Right ventricle myocardium inferior (tissue), 1 donor: ENCODE measurements at regions of chr6 and their contacts with region 1.

Region 1: GRCh38 chr6:89829591-89830385 is at the start of gene CASP8AP2:
- DNase-seq: peak; percentile 96
- ATAC-seq: peak; percentile 99
- total RNA-seq, gene CASP8AP2: 13.4 TPM

Region 2: DNA sequence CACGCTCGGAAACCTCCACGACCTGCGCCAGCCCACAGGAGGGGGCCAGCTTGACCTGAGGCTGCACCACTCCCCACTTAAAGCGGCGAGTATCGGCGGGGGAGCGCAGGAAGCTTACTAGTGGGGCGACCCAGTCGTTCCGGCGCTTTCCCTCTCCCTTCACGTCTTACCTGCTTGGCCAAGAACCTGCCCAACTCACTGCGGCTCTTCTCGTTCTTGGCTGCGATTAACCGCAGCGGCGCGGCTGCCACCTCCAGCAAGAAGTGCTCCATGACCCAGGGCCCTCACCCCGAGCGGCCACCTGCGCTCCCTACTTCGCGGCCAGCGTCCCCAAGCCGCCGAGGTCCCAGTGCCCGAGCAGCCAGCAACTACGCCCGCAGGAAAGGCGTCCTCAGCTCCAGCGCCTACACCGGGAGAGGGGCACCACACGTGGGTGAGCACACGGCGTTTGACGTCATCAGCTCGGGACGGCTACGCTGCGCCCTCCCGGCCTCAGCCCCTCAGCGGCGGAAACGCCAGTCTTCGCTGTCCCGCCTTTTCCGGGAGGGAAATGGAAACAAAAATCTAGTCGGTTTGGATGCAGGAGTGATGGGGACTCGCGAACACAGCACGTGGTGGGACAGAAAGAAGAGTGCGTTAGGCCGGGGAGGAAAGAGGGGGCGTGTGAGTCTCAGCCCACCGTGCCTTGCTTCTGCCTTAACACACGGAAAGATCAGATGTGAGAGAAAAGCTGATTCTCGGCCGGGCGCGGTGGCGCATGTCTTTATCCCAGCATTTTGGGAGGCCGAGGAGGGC is 10.3 kb before region 1 on chr6 and contains the start of gene MDN1:
- intact Hi-C with region 1: loop called (anchors 1 kb)
- DNase-seq: peak; percentile 93
- ATAC-seq: peak; percentile 99
- total RNA-seq, gene MDN1: 23.4 TPM